HEK293 (cell line): ENCODE measurements at regions of chr2 and their contacts with region 1.

Region 1: DNA sequence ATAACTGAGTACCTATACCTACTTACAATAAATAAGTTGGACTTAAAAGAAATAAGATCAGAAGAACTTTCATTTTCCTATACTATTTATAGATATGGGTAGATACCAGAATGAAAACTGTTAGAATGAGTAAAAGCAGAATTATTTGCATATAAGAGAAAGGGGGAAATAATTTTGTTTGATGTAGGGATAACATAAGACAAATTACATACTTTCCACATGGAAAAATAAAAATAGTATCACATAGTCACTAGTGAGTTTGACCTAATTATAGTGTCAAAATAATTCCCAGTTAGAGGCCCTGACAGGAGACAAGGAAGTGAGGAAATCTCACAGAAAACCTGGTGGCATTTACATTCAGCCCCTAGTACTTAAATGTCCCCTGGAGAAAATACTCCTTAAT is 28.6 kb downstream of the KCMF1 start:
- H3K4me3 ChIP-seq: no peak overlapping the region
- H3K27ac ChIP-seq: no peak overlapping the region
- H3K4me1 ChIP-seq: peaks cover 10% of the 10 kb centered on the region; the same call in 1 of the 2 replicates
- CTCF ChIP-seq: no peak

Region 2: DNA sequence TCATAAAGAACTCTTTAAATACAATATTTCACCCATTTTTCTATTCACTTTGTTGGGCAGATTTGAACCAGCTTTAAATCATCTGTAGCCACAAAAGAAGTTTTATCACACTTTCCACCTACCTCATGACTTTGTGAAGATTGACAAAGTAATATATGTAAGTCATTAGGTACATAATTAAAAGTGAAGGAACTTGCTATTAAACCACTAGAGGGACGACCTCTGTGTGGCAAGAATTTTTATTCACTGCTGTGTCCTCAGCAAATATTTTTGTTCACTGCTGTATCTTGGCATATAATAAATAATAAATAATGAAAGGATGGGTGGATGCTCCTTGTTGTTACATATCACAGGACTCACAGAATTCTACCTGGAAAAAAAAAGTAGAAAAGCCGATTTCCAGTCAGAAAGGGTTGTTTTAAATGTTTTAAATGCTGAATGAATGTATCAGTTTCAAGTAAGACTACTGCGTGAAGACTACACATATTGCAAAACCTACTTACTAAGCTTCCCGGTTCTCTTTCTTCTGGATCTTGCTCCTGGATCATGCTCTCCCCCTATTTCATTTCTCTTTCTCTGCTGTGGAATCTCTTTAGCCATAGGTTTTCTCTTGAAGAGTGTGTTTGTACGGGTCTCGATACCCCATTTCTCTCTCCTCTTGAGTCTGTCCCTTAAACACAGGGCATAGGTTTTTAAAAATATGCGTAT is 16.3 kb after region 1 on chr2:
- CTCF ChIA-PET with region 1: interaction called, 21 read pairs
- POLR2A ChIA-PET with region 1: interaction called, 6 read pairs
- H3K4me3 ChIP-seq: no peak overlapping the region
- H3K27ac ChIP-seq: no peak overlapping the region
- H3K4me1 ChIP-seq: peaks cover 10% of the 10 kb centered on the region; the same call in 1 of the 2 replicates
- CTCF ChIP-seq: no peak